ENCODE measurements at regions of chr7 and their contacts with region 1.

Region 1: DNA sequence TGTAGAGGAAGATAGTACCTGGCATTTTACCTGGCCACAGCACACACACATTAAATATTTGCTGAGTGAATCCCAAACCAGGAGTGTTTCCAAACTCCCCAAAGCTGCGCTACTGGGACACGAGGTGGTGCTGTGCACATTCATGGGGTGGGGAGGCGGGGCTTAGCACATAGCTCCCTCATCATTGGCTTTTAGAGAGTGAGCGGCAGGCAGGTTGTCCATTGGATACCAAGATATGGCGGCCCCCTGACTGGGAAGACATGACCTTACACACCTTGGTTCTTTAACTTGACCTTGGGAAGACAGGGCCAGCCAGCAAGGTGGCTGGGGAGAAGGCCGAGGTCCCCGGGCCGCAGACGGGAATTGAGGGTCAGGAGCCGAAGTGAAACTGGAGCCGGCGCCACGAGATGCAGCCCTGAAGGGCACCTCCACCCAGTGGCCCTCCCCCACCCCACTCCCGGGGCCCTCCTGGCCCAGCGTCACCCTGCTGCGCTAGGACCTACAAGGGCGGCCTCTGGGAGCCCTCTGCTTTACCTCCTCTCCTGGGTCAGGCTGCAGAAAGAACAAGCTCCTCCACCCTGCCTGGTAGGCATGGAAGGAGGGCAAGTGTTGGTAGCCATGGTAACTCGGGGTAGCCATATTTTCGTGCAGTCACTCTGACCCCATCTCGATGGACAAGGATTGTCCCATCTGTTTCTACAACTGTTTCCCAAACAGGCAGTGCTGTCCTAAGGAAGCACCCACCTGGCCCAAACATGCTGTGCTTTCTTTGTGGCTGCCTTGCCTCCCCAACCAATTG is 24.0 kb downstream of the TMEM176A start:
- DNase-seq: no peak
- ATAC-seq: no peak
- H3K4me3 Mint-ChIP-seq: no peak overlapping the region
- H3K27ac Mint-ChIP-seq: no peak overlapping the region
- H3K4me1 Mint-ChIP-seq: no peaks in the 10 kb centered on the region
- H3K27me3 Mint-ChIP-seq: peaks cover 24% of the 10 kb centered on the region

Region 2: GRCh38 chr7:149569025-149569725 is 1255.4 kb before region 1 on chr7:
- CTCF ChIA-PET with region 1: no interaction called
- POLR2A ChIA-PET with region 1: no interaction called
- intact Hi-C with region 1: loop called in 1 of 2 experiments (anchors 5 kb)
- DNase-seq: no peak
- ATAC-seq: no peak
- H3K4me3 Mint-ChIP-seq: no peak overlapping the region
- H3K27ac Mint-ChIP-seq: no peak overlapping the region
- H3K4me1 Mint-ChIP-seq: peaks cover 4% of the 10 kb centered on the region
- H3K27me3 Mint-ChIP-seq: no peaks in the 10 kb centered on the region

Region 3: GRCh38 chr7:150806863-150807262 is 17.7 kb before region 1 on chr7:
- CTCF ChIA-PET with region 1: no interaction called
- POLR2A ChIA-PET with region 1: no interaction called
- intact Hi-C with region 1: no loop called
- DNase-seq: no peak
- ATAC-seq: no peak
- H3K4me3 Mint-ChIP-seq: no peak overlapping the region
- H3K27ac Mint-ChIP-seq: no peak overlapping the region
- H3K4me1 Mint-ChIP-seq: no peaks in the 10 kb centered on the region
- H3K27me3 Mint-ChIP-seq: peaks cover 32% of the 10 kb centered on the region

Region 4: GRCh38 chr7:151599401-151600227 is 775.0 kb after region 1 on chr7:
- CTCF ChIA-PET with region 1: no interaction called
- POLR2A ChIA-PET with region 1: no interaction called
- intact Hi-C with region 1: no loop called
- DNase-seq: peak; percentile 23
- ATAC-seq: peak; percentile 33
- H3K4me3 Mint-ChIP-seq: no peak overlapping the region
- H3K27ac Mint-ChIP-seq: no peak overlapping the region
- H3K4me1 Mint-ChIP-seq: peaks cover 18% of the 10 kb centered on the region
- H3K27me3 Mint-ChIP-seq: no peaks in the 10 kb centered on the region

Measured in activated CD4-positive, alpha-beta T cell treated with anti-CD3 and anti-CD28 coated beads for 36 hours (primary cell).